Caco-2 (cell line): ENCODE measurements at regions of chr14 and their contacts with region 1.

Region 1: GRCh38 chr14:86902176-86902950 is 1090.6 kb downstream of the GALC start:
- DNase-seq: no peak
- H3K4me3 ChIP-seq: no peak overlapping the region
- H3K4me3 Mint-ChIP-seq: no peak overlapping the region
- H3K27ac Mint-ChIP-seq: no peak overlapping the region
- H3K4me1 ChIP-seq: no peaks in the 10 kb centered on the region
- H3K4me1 Mint-ChIP-seq: no peaks in the 10 kb centered on the region
- H3K27me3 ChIP-seq: no peaks in the 10 kb centered on the region
- H3K27me3 Mint-ChIP-seq: no peaks in the 10 kb centered on the region
- CTCF ChIP-seq: no peak

Region 2: GRCh38 chr14:86654558-86655184 is 247.7 kb before region 1 on chr14:
- CTCF ChIA-PET with region 1: no interaction called
- POLR2A ChIA-PET with region 1: no interaction called
- intact Hi-C with region 1: loop called (anchors 10 kb)
- DNase-seq: peak; percentile 49 to 66
- H3K4me3 ChIP-seq: no peak overlapping the region
- H3K4me3 Mint-ChIP-seq: no peak overlapping the region
- H3K27ac Mint-ChIP-seq: no peak overlapping the region
- H3K4me1 ChIP-seq: no peaks in the 10 kb centered on the region
- H3K4me1 Mint-ChIP-seq: no peaks in the 10 kb centered on the region
- H3K27me3 ChIP-seq: no peaks in the 10 kb centered on the region
- H3K27me3 Mint-ChIP-seq: peaks cover 3% of the 10 kb centered on the region
- CTCF ChIP-seq: peak; percentile 27 to 70